ENCODE measurements at regions of chr5 and their contacts with region 1.

Region 1: GRCh38 chr5:52915176-52915875 is 73.8 kb upstream of the ITGA2 start:
- DNase-seq: no peak
- H3K4me3 ChIP-seq: peak overlapping the region in 3 of 4 donors; percentile 13 to 35 (median 25)
- H3K27ac ChIP-seq: peak overlapping the region in 3 of 4 donors; percentile 25 to 28 (median 28)
- H3K4me1 ChIP-seq: peaks cover 0 to 45% (median 38%) of the 10 kb centered on the region in 4 donors
- H3K27me3 ChIP-seq: no peaks in the 10 kb centered on the region
- CTCF ChIP-seq: peak; percentile 66 to 76 (median 69)
- EP300 ChIP-seq: no peak
- POLR2A ChIP-seq: no peak

Region 2: DNA sequence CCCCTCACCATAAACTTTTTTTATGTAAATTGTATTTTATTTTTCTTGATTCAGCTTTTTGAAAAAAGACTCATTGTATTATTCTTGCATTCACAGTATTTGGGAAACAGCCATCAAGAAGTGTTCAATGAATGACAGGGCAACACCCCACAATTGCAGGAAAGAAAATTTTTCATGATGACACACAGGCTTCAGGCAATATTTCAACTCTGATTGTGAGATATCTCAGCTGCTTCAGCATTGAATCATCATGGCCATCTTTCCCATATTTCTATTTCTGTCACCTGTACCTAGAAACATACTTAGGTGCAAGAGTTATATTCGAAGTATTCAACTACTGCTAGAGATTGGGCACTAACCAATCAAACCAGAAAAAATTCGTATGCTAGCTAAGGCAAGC is 1086.1 kb before region 1 on chr5:
- intact Hi-C with region 1: no loop called
- DNase-seq: no peak
- H3K4me3 ChIP-seq: no peak overlapping the region
- H3K27ac ChIP-seq: no peak overlapping the region
- H3K4me1 ChIP-seq: peaks cover 0 to 3% (median 0%) of the 10 kb centered on the region in 4 donors
- H3K27me3 ChIP-seq: no peaks in the 10 kb centered on the region
- CTCF ChIP-seq: no peak
- EP300 ChIP-seq: no peak
- POLR2A ChIP-seq: no peak

Region 3: DNA sequence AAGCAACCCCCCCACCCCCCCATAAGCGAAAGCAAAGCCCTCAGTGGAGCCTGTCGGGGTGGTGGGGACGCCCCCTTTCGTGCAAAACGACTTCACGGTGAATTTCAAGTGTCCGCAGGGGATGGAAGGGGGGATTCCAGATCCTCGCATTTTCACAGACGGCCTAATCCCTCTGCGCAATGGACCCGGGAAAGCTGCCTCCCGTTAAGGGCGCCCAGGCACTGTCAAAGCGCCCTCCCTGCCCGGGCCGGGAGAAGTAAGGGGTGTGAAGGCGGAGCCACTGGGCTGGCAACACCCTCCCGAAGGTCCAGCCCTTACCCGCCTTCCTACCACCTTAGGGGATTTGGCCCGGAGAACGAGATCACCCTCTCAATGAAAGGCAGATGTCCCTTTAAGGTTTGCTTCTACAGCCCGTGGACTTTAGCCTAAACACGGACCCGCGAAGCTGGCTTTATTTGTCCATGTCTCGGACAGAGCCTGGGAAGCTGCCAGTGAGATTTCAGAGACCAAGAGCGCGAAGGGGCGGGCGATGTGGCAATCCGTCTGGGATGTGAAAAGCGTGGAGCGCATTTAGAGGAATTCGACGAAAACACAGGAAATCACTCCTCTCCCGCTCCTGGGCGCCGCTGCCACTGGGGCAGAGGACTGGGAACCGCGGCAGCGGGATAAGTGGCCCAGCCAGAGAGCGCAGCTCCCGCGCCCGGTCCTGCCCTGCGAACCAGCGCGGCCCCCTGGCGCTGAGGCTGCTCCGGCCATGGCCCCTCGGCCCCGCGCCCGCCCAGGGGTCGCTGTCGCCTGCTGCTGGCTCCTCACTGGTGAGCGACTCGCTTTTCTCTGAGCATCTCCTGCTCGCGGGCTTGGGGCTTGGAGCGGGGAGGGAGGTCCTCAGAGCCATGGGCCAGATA is 127.5 kb before region 1 on chr5 and contains the starts of genes ITGA1 and PELO:
- intact Hi-C with region 1: loop called (anchors 1 kb)
- DNase-seq: peak; percentile 97
- H3K4me3 ChIP-seq: peak within 1 kb of the TSS; percentile 69 to 85 (median 74)
- H3K27ac ChIP-seq: peak within 1 kb of the TSS; percentile 92 to 96 (median 94)
- H3K4me1 ChIP-seq: peaks cover 11 to 35% (median 31%) of the 10 kb centered on the region in 4 donors
- H3K27me3 ChIP-seq: no peaks in the 10 kb centered on the region
- CTCF ChIP-seq: peak; percentile 45 to 69 (median 61)
- EP300 ChIP-seq: no peak
- POLR2A ChIP-seq: peak; percentile 8
- total RNA-seq, gene ITGA1: 228 to 302 (median 235) TPM
- total RNA-seq, gene PELO: 43.1 to 77.7 (median 69.7) TPM

Region 4: DNA sequence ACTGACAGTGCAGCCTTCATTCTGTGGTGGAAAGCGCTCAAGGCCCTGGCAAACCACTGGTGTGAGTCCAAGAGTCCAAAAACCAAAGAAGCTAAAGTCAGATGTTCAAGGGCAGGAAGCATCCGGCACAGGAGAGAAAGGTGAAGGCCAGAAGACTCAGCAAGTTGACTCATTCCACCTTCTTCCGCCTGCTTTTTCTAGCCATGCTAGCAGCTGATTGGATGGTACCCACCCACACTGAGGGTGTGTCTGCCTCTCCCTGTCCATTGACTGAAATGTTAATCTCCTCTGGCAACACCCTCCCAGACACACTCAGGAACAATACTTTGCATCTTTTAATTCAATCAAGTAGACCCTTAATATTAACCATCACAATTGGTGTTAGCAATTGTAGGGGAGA is 941.2 kb after region 1 on chr5:
- intact Hi-C with region 1: no loop called
- DNase-seq: no peak
- H3K4me3 ChIP-seq: no peak overlapping the region
- H3K27ac ChIP-seq: no peak overlapping the region
- H3K4me1 ChIP-seq: no peaks in the 10 kb centered on the region
- H3K27me3 ChIP-seq: no peaks in the 10 kb centered on the region
- CTCF ChIP-seq: no peak
- EP300 ChIP-seq: no peak
- POLR2A ChIP-seq: no peak

Measured in esophagus muscularis mucosa (tissue), 4 donors.